ENCODE measurements at regions of chr5 and their contacts with region 1.

Region 1: DNA sequence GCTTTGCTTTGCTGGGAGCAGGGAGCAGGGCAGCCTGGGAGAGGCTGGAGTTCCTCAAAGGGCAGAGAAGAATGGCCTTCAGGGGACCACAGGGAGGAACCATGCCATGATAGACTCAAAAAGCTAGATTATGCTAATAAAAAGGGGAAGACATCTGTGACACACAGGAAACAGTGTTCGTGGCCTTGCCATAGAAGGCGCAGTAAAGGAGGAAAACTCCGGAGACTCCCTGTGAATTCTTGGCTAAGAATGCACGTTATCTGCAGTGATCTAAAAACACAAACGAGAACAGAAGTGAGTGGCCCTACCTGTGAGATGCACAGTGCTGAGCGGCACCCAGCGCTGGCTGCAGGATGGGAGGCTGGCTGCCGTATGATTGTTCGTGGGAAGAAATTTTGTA is 15.9 kb upstream of the LTC4S start:
- DNase-seq: peak; percentile 26

Region 2: GRCh38 chr5:179422213-179422855 is 355.6 kb before region 1 on chr5:
- intact Hi-C with region 1: loop called in 1 of 2 experiments (anchors 5 kb)
- DNase-seq: no peak